ENCODE measurements at regions of chr1 and their contacts with region 1.

Region 1: GRCh38 chr1:206725109-206725963 is 40.6 kb downstream of the MAPKAPK2 start:
- DNase-seq: no peak

Region 2: GRCh38 chr1:206684478-206685333 is 40.6 kb before region 1 on chr1 and contains the start of gene MAPKAPK2:
- intact Hi-C with region 1: loop called in 1 of 2 experiments (anchors 5 kb)
- DNase-seq: peak; percentile 94
- total RNA-seq, gene MAPKAPK2: 69.0 to 102 TPM

Region 3: DNA sequence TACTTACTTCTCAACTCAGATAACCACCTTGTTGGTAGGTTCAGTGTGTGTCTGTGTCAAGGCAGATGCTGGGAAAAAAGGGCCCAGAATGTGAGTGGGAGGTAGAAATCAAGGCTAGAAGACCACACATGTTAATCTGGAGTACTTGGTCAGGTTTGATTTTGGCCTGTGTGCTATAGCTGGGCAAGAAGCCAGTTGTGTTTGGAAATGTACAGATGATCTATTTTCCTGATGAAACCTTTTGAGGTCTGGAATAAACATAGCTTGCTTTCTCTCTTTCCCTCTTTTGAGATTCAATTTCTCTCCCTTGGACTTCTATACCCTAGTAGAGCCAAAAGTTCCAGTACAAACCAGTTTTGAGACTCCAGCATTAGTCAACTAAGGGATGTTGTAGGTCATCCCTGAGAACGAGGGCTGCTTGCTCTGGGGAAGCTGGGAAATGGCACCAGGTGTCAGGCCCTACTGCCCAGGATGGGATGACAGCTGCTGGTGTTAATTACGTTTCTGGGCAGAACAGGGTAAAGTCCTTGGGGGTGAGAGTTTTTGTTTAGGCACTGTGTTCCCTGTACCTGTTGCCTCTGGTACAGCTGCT is 24.8 kb before region 1 on chr1:
- intact Hi-C with region 1: loop called in 1 of 2 experiments (anchors 1 kb)
- DNase-seq: no peak

Region 4: DNA sequence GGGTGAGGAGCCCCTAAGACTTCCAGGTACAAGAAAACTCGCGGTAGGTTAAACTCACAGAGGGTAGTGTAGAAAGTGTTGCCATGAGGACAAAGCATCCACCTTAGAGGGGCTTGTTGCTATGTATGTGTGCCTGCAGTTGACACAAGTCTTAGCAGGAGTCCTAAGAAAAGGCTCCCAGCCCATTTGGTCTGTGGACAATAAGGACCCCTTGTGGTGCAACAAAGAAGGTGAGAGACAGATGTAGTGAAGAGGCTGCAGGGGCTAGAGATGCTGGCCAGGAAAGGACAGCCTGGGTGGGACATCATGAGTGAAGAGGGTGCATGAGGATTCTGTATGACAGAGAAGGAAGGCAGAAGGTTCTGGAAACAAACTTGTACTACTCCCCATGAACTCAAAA is 83.3 kb after region 1 on chr1:
- intact Hi-C with region 1: loop called in 1 of 2 experiments (anchors 5 kb)
- DNase-seq: no peak